G401 (cell line): ENCODE measurements at regions of chr12 and their contacts with region 1.

Region 1: GRCh38 chr12:11228296-11228879 is 41.1 kb downstream of the PRB3 start:
- DNase-seq: peak; percentile 9

Region 2: DNA sequence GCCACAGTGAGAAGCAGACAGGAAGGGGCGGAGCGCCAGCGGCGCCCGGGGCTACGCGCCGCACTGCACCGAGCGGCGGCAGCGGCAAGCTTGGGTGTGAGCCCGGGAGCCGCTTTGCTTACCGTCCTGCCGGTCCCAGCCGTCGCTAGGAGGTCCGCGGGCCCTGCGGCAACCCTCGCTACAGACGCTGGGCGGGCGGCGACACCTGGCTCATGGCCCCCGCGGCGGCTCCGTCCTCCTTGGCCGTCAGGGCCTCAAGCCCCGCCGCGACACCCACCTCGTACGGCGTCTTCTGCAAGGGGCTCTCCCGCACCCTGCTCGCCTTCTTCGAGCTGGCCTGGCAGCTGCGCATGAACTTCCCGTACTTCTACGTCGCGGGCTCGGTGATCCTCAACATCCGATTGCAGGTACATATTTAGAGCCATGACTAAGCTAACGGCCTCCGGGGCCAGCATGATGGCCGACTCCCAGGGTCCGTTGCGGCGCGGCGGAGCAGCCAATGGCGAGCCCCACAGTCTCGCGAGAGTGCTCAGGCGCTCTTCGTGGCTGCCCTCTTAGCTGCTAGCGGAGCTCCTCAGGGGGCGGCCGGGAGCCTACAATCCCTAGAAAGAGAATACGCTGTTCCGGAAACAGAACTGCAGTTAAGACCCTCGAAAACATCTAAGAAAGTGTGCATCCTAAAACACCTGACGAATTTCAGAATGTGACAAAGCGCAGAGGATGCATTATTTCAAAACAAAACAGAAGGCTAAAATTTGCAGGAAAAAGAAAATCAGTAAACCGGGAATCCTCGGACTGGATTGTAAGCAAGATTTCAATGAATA is 57.0 kb before region 1 on chr12 and contains the start of gene SMIM10L1:
- in situ Hi-C with region 1: no loop called
- DNase-seq: peak; percentile 91
- total RNA-seq, gene SMIM10L1: 10.3 and 11.4 TPM in 2 replicates

Region 3: GRCh38 chr12:11486623-11487444 is 258.4 kb after region 1 on chr12:
- in situ Hi-C with region 1: loop called (anchors 25 kb)
- DNase-seq: peak; percentile 76